Common myeloid progenitor, CD34-positive (primary cell): ENCODE measurements at regions of chr1 and their contacts with region 1.

Region 1: DNA sequence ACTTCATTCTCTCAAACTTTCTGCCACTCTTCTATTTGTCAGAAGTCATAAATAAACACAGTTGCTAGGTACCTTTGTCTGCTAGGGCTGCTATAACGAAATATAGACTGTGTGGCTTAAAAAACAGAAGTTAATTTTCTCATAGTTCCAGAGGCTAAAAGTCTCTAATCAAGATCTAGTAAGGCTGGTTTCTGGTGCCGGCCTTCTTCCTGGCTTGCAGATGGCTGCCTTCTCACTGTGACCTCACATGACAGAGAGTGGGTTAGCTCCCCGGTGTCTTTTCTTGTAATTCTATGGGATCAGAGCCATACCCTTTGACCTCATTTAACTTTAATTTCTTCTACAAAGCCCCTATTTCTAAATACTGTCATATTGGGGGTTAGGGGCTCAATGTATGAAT is 5.9 kb downstream of the PDC start:
- DNase-seq: peak; percentile 41 to 84 (median 74)
- H3K4me3 ChIP-seq: no peak overlapping the region
- H3K27ac ChIP-seq: no peak overlapping the region
- H3K4me1 ChIP-seq: peaks cover 7 to 33% (median 19%) of the 10 kb centered on the region in 4 experiments
- H3K27me3 ChIP-seq: no peaks in the 10 kb centered on the region

Region 2: GRCh38 chr1:186404454-186405051 is 50.4 kb before region 1 on chr1:
- CTCF ChIA-PET with region 1: no interaction called
- POLR2A ChIA-PET with region 1: no interaction called
- DNase-seq: peak; percentile 82 to 94 (median 92)
- H3K4me3 ChIP-seq: no peak overlapping the region
- H3K27ac ChIP-seq: peak overlapping the region; percentile 27 to 56
- H3K4me1 ChIP-seq: no peaks in the 10 kb centered on the region
- H3K27me3 ChIP-seq: no peaks in the 10 kb centered on the region

Region 3: GRCh38 chr1:186482661-186483255 is 27.8 kb after region 1 on chr1:
- CTCF ChIA-PET with region 1: no interaction called
- POLR2A ChIA-PET with region 1: interaction called, 15 read pairs
- DNase-seq: peak; percentile 71 to 79 (median 72)
- H3K4me3 ChIP-seq: no peak overlapping the region
- H3K27ac ChIP-seq: no peak overlapping the region
- H3K4me1 ChIP-seq: no peaks in the 10 kb centered on the region
- H3K27me3 ChIP-seq: no peaks in the 10 kb centered on the region